AG04449 (cell line): ENCODE measurements at regions of chr2 and their contacts with region 1.

Region 1: GRCh38 chr2:157777427-157777826 is 98.7 kb downstream of the ACVR1 start:
- DNase-seq: no peak
- H3K4me3 ChIP-seq: no peak overlapping the region
- CTCF ChIP-seq: peak; percentile 45

Region 2: DNA sequence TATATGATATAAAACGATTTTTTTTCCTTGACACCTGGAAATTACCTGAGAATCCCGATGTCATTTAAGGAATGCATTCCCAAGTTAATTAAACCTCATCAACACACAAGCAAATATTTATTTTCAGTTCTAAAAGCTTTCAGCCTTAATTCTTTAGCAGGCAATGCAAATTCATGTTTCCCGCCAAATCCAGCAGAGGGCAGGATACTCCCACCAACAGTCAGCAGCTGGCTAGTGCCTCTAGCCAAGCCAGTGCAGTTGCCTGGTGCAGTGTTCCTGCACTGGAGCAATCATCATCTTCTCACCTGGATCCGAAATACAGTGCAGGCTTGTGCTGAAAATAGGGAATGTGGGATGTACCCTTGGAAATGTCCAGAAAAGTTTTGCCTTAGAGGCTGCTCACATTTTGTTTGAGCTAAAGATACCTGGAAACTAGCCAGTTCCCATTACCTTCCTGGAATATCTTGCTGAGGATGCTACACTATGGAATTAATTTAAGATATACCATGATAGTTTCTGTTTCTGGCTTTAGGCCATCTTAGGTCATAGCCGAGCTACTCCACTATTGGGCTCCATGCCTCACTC is 285.1 kb before region 1 on chr2:
- CTCF ChIA-PET with region 1: interaction called, 10 read pairs
- POLR2A ChIA-PET with region 1: no interaction called
- DNase-seq: no peak
- H3K4me3 ChIP-seq: no peak overlapping the region
- CTCF ChIP-seq: peak; percentile 73

Region 3: GRCh38 chr2:157732548-157732963 is 44.9 kb before region 1 on chr2:
- CTCF ChIA-PET with region 1: no interaction called
- POLR2A ChIA-PET with region 1: no interaction called
- DNase-seq: no peak
- H3K4me3 ChIP-seq: no peak overlapping the region
- CTCF ChIP-seq: no peak

Region 4: GRCh38 chr2:157876066-157876787 is 98.8 kb after region 1 on chr2 and contains the start of gene ACVR1:
- CTCF ChIA-PET with region 1: interaction called, 32 read pairs
- POLR2A ChIA-PET with region 1: no interaction called
- DNase-seq: peak; percentile 89
- H3K4me3 ChIP-seq: peak within 1 kb of the TSS; percentile 89
- CTCF ChIP-seq: no peak

Region 5: GRCh38 chr2:157967856-157968255 is 190.4 kb after region 1 on chr2:
- CTCF ChIA-PET with region 1: no interaction called
- POLR2A ChIA-PET with region 1: no interaction called
- DNase-seq: no peak
- H3K4me3 ChIP-seq: no peak overlapping the region
- CTCF ChIP-seq: no peak

Region 6: GRCh38 chr2:158006961-158007719 is 229.7 kb after region 1 on chr2:
- CTCF ChIA-PET with region 1: interaction called, 169 read pairs
- POLR2A ChIA-PET with region 1: no interaction called
- DNase-seq: no peak
- H3K4me3 ChIP-seq: no peak overlapping the region
- CTCF ChIP-seq: no peak

Region 7: DNA sequence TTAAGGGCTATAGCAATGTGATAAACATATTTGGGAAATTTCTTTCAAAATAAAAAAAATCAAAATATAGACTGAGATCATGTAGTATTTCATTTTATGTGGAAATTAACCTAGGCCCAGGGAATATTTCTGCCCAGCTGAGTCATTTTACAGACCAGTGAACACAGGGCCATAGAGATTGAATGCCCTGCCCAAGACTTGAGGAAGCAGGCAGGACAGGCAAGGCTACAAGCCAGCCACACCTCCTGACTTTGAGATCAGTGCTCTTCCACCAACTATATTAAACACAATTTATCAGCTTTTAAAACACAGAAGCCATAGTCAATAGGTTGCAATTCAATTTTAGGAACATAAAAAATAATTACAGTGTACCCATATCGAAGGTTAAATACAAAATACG is 666.2 kb after region 1 on chr2:
- CTCF ChIA-PET with region 1: no interaction called
- POLR2A ChIA-PET with region 1: no interaction called
- DNase-seq: no peak
- H3K4me3 ChIP-seq: no peak overlapping the region
- CTCF ChIP-seq: no peak